B cell (primary cell): ENCODE measurements at regions of chr1 and their contacts with region 1.

Region 1: GRCh38 chr1:231603598-231604275 is 22.9 kb upstream of the DISC1 start:
- DNase-seq: peak; percentile 70
- ATAC-seq: peak; percentile 83
- H3K4me3 ChIP-seq: peak overlapping the region; percentile 37 to 94 (median 68)
- H3K4me3 Mint-ChIP-seq: peak overlapping the region; percentile 93
- H3K27ac ChIP-seq: peak overlapping the region in 1 of 2 donors; percentile 48
- H3K27ac Mint-ChIP-seq: peak overlapping the region; percentile 67
- H3K4me1 ChIP-seq: peaks cover 6 to 10% of the 10 kb centered on the region in 2 donors
- H3K4me1 Mint-ChIP-seq: peaks cover 14% of the 10 kb centered on the region
- H3K27me3 ChIP-seq: peaks cover 0 to 3% (median 0%) of the 10 kb centered on the region in 4 experiments
- H3K27me3 Mint-ChIP-seq: peaks cover 8% of the 10 kb centered on the region
- CTCF ChIP-seq: peak; percentile 85

Region 2: GRCh38 chr1:230632273-230632873 is 971.4 kb before region 1 on chr1:
- CTCF ChIA-PET with region 1: no interaction called
- POLR2A ChIA-PET with region 1: no interaction called
- intact Hi-C with region 1: no loop called
- DNase-seq: peak; percentile 21
- ATAC-seq: peak; percentile 33
- H3K4me3 ChIP-seq: no peak overlapping the region
- H3K4me3 Mint-ChIP-seq: no peak overlapping the region
- H3K27ac ChIP-seq: no peak overlapping the region
- H3K27ac Mint-ChIP-seq: no peak overlapping the region
- H3K4me1 ChIP-seq: no peaks in the 10 kb centered on the region
- H3K4me1 Mint-ChIP-seq: no peaks in the 10 kb centered on the region
- H3K27me3 ChIP-seq: peaks cover 0 to 17% (median 7%) of the 10 kb centered on the region in 4 experiments
- H3K27me3 Mint-ChIP-seq: peaks cover 21% of the 10 kb centered on the region
- CTCF ChIP-seq: no peak

Region 3: DNA sequence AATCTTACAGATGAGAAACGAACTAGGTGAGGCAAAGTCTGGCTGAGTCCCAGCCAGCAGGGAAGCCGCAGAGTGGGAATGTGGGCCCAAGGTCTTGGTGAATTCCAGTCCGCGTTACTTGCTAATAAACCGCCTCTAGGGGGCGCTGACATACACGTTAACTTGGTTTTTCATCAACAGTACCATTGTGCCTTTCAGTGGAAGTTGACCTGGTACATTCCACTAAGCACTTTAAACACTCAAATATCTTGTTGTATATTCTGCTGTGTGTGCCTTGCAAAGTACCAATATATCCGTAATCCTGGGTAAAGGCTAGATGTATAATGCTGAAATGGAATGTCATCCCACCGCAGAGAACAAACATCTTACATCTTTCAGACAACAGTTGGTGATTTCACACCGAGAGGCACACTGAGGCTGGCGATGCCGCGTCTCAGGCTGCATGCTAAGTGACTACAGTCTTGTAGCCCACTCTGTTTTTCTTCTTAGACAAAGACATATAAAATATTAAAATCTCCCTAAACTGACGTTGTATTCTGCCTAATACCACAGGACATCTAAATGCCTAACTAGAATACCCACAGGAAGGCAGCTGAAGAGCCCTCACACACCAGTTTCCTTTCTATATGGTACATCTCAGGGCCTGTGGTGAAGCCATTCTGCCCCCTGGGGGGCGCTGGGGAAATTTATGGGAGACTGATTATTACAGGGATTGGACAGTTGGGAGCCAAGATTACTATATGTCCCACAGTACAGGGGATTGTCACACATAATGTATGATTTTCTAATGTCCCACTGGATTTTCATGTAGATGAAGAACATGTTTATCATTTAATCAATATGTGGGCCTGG is 686.2 kb before region 1 on chr1:
- CTCF ChIA-PET with region 1: interaction called, 3 read pairs
- POLR2A ChIA-PET with region 1: no interaction called
- intact Hi-C with region 1: loop called (anchors 2 kb)
- DNase-seq: peak; percentile 85
- ATAC-seq: peak; percentile 64
- H3K4me3 ChIP-seq: no peak overlapping the region
- H3K4me3 Mint-ChIP-seq: no peak overlapping the region
- H3K27ac ChIP-seq: peak overlapping the region in 1 of 2 donors; percentile 53
- H3K27ac Mint-ChIP-seq: no peak overlapping the region
- H3K4me1 ChIP-seq: no peaks in the 10 kb centered on the region
- H3K4me1 Mint-ChIP-seq: no peaks in the 10 kb centered on the region
- H3K27me3 ChIP-seq: no peaks in the 10 kb centered on the region
- H3K27me3 Mint-ChIP-seq: no peaks in the 10 kb centered on the region
- CTCF ChIP-seq: peak; percentile 91

Region 4: DNA sequence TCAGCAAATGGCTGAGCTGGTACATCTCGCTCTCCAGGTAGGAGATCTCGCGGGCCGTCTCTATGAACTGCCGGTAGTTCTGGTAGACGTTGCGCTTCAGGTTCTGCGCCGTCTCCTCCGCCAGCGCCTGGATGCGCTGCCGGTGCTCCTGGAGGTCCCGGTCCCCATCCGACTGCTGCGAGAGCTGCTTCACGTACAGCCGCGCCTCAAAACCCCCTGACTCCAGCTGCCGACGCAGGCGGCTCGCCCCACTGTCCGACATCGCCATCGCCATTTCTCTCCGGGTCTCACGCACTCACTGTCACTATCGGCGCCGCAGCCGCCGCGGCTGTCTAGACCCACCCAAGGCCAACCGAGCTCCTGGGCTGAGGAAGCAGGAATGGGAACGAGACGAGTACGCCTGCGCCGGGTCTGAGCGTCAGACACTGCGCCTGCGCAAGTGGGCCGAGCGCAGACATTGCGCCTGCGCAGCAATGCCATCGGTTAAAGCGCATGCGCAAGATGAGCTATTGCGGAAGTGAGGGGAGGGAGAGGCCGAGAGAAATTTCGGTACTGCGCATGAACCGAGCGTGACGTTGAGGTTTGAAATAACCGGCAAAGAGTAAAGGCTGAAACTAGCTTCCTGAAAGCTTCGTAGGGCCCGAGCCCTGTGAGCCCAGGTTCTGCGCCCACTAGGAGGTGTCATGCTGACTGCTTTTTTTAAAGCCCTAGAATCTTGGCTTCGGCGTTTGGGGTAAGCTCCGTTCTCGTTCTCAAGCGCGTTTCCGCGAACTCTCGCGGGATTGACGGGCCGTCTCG is 266.1 kb before region 1 on chr1 and contains the start of gene EXOC8:
- CTCF ChIA-PET with region 1: interaction called, 11 read pairs
- POLR2A ChIA-PET with region 1: interaction called, 6 read pairs
- intact Hi-C with region 1: no loop called
- DNase-seq: peak; percentile 99
- ATAC-seq: peak; percentile 83
- H3K4me3 ChIP-seq: peak within 1 kb of the TSS; percentile 68 to 96 (median 94)
- H3K4me3 Mint-ChIP-seq: peak within 1 kb of the TSS; percentile 99
- H3K27ac ChIP-seq: peak within 1 kb of the TSS; percentile 93 to 99
- H3K27ac Mint-ChIP-seq: peak within 1 kb of the TSS; percentile 100
- H3K4me1 ChIP-seq: peaks cover 46 to 54% of the 10 kb centered on the region in 2 donors
- H3K4me1 Mint-ChIP-seq: peaks cover 59% of the 10 kb centered on the region
- H3K27me3 ChIP-seq: no peaks in the 10 kb centered on the region
- H3K27me3 Mint-ChIP-seq: peaks cover 3% of the 10 kb centered on the region
- CTCF ChIP-seq: no peak
- total RNA-seq, gene EXOC8: 32.5 and 32.6 TPM in 2 replicates

Region 5: DNA sequence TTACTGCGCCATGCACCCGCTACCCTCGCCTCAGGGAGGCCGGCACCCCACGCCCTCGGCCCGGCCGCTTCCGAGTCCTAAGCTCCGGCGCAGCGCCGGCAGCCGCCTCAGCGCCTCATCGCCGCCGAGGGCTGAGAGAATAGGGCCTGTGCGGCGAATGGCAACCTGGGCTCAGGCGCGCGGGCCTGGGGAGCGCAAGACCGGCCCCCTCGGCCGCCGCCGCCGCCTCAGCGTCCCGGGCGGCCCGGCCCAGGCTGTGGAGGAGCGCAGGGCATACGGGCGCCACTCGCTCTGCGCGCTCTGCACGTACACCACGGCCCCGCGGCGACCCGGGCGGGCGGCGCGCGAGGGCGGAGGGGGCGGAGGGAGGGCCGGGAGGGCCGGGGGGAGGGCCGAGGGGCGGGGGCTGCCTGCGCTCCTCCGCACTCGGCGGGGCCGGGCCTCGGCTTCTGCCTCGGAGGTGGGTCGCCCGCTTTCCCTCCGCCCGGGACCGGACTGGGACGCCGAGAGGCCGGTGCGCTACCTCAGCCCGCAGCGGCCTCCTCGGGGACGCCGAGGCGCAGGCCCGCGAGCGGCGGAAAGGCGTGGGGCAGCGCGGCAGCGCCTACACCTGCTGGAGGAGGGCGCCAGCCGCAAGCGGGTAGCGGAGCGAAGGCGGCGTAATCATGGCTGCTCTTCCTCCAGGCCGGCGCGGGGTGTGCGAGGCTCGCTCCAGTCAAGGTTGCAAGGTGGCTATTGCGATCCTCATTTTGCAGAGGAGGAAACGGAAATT is 181.6 kb before region 1 on chr1 and contains the start of gene EGLN1:
- CTCF ChIA-PET with region 1: interaction called, 4 read pairs
- POLR2A ChIA-PET with region 1: no interaction called
- intact Hi-C with region 1: loop called (anchors 1 kb)
- DNase-seq: peak; percentile 91
- ATAC-seq: peak; percentile 85
- H3K4me3 ChIP-seq: peak within 1 kb of the TSS; percentile 65 to 96 (median 77)
- H3K4me3 Mint-ChIP-seq: peak within 1 kb of the TSS; percentile 99
- H3K27ac ChIP-seq: peak within 1 kb of the TSS; percentile 54 to 68
- H3K27ac Mint-ChIP-seq: peak within 1 kb of the TSS; percentile 97
- H3K4me1 ChIP-seq: peaks cover 33 to 38% of the 10 kb centered on the region in 2 donors
- H3K4me1 Mint-ChIP-seq: peaks cover 47% of the 10 kb centered on the region
- H3K27me3 ChIP-seq: no peaks in the 10 kb centered on the region
- H3K27me3 Mint-ChIP-seq: no peaks in the 10 kb centered on the region
- CTCF ChIP-seq: peak; percentile 25
- total RNA-seq, gene EGLN1: 18.5 and 20.4 TPM in 2 replicates

Region 6: DNA sequence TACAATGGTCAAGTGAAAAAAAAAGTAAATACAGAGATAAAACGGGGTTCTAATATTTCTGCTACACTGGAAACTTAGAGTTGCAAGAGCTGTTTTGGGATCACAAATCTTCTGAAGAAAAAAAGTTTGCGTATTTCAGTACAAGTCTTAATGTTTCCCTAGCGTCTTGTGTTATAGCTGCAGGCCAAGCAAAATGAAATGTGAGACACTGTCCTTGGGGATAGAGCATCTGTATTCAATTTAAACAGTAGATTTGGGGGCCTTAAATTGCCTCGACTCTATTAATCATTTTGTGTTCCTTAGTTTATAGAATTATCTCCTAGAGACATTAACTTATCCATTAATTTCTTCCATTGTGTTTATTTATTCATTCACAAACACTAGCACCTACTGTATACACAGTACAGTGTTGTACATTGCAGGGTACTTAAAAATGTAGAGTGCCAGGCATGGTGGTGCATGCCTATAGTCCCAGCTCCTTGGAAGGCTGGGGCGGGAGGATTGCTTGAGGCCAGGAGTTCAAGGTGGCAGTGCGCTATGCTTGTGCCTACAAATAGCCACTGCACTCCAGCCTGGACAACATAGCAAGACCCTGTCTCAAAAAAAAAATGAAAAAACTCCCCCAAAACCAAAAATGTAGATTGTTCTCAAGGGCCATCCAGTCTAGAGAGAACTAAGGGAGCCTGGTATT is 30.7 kb after region 1 on chr1:
- CTCF ChIA-PET with region 1: interaction called, 4 read pairs
- POLR2A ChIA-PET with region 1: interaction called, 10 read pairs
- intact Hi-C with region 1: no loop called
- DNase-seq: no peak
- ATAC-seq: no peak
- H3K4me3 ChIP-seq: no peak overlapping the region
- H3K4me3 Mint-ChIP-seq: no peak overlapping the region
- H3K27ac ChIP-seq: no peak overlapping the region
- H3K27ac Mint-ChIP-seq: no peak overlapping the region
- H3K4me1 ChIP-seq: no peaks in the 10 kb centered on the region
- H3K4me1 Mint-ChIP-seq: no peaks in the 10 kb centered on the region
- H3K27me3 ChIP-seq: no peaks in the 10 kb centered on the region
- H3K27me3 Mint-ChIP-seq: no peaks in the 10 kb centered on the region
- CTCF ChIP-seq: no peak